Activated CD8-positive, alpha-beta T cell treated with anti-CD3 and anti-CD28 coated beads for 36 hours (primary cell): ENCODE measurements at regions of chr19 and their contacts with region 1.

Region 1: GRCh38 chr19:46753420-46754155 is 7.3 kb upstream of the STRN4 start:
- DNase-seq: peak; percentile 85
- ATAC-seq: peak; percentile 92
- H3K4me3 Mint-ChIP-seq: no peak overlapping the region
- H3K27ac Mint-ChIP-seq: no peak overlapping the region
- H3K4me1 Mint-ChIP-seq: peaks cover 8% of the 10 kb centered on the region
- H3K27me3 Mint-ChIP-seq: no peaks in the 10 kb centered on the region
- CTCF ChIP-seq: peak; percentile 13

Region 2: DNA sequence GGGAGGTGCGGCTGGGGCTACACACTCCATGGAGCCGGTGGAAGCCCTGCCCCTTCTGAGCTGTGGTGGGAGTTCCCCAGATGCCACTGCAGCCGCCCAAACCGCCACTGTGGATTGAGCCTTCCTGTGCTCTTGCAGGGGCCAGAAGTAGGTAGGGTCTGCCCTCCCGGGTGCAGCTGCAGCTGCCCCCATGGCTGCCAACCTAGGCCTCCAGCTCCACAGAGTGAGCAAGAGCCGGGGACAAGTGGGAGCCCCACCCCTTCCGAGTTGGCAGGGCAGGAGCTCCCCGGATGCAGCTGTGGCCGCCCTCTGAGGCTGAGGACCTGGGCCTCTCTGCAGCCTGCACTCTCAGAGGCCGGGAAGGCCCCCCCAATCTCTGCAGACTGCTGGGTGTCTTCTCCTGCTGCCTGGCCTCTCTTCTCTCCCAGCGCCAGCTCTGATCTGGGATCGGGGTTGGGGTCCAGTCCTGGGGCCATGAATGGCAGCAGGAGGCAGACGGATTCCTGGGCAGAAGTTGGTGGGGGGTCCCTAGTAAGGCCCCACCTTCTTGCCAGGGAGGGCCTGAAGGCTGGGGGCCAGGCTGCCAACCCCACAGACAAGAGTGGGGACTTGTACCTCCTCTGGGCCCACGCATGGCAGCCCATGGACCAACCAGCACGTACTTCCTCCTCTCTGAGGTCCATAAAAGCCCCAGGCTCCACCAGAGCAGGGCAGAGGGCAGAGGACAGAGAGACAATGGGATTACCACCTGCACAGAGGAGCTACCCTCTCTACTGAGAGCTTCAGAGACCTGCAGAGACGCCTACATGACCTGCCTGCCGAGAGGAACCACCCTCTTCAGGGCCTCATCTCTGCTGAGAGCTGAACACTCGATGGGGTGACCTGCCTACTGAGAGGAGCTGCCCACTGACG is 68.2 kb after region 1 on chr19:
- CTCF ChIA-PET with region 1: interaction called, 13 read pairs
- POLR2A ChIA-PET with region 1: interaction called, 4 read pairs
- intact Hi-C with region 1: no loop called
- DNase-seq: peak; percentile 80
- ATAC-seq: peak; percentile 85
- H3K4me3 Mint-ChIP-seq: peak overlapping the region; percentile 25
- H3K27ac Mint-ChIP-seq: peak overlapping the region; percentile 74
- H3K4me1 Mint-ChIP-seq: peaks cover 41% of the 10 kb centered on the region
- H3K27me3 Mint-ChIP-seq: no peaks in the 10 kb centered on the region
- CTCF ChIP-seq: no peak

Region 3: GRCh38 chr19:46828484-46828883 is 74.9 kb after region 1 on chr19:
- CTCF ChIA-PET with region 1: interaction called, 12 read pairs
- POLR2A ChIA-PET with region 1: interaction called, 4 read pairs
- intact Hi-C with region 1: no loop called
- DNase-seq: peak; percentile 91
- ATAC-seq: peak; percentile 60
- H3K4me3 Mint-ChIP-seq: no peak overlapping the region
- H3K27ac Mint-ChIP-seq: no peak overlapping the region
- H3K4me1 Mint-ChIP-seq: peaks cover 18% of the 10 kb centered on the region
- H3K27me3 Mint-ChIP-seq: no peaks in the 10 kb centered on the region
- CTCF ChIP-seq: no peak